CD8-positive, alpha-beta T cell (primary cell): ENCODE measurements at regions of chr4 and their contacts with region 1.

Region 1: DNA sequence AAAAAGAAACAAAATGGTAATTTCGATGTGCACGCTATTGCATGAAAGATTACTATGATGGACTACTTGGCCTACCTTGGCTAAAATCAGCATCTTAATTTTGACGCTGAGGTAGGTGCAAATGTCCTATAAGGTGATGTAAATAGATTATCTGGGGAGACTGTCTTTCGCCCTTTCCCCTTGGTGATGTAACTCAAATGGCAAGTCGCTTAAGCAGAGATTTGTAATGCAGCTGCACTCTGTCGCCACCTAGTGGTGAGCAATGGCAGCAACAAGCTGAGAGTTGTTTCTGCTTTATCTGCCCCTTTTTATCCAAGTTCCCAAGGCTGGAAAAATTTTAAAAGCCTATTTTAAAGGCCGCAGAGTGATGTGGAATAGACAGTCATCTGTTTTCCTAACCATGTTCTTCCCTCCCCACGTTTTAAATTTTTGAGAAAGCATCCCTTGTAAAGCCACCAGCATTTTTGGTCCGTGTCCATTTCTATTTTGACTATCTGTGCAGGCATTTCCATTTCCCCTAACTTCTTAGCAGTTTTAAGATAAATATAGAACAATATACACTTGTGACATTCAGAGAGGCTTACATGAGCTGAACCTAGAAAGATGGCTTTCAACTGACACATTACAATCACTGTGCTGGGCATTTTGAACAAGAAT is 62.4 kb upstream of the PDLIM3 start:
- DNase-seq: peak; percentile 22 to 77 (median 71)
- ATAC-seq: peak; percentile 71
- H3K4me3 ChIP-seq: no peak overlapping the region
- H3K4me3 Mint-ChIP-seq: no peak overlapping the region
- H3K27ac ChIP-seq: no peak overlapping the region
- H3K27ac Mint-ChIP-seq: no peak overlapping the region
- H3K4me1 ChIP-seq: no peaks in the 10 kb centered on the region
- H3K4me1 Mint-ChIP-seq: peaks cover 3% of the 10 kb centered on the region
- H3K27me3 ChIP-seq: no peaks in the 10 kb centered on the region
- H3K27me3 Mint-ChIP-seq: peaks cover 24% of the 10 kb centered on the region
- CTCF ChIP-seq: peak; percentile 99

Region 2: DNA sequence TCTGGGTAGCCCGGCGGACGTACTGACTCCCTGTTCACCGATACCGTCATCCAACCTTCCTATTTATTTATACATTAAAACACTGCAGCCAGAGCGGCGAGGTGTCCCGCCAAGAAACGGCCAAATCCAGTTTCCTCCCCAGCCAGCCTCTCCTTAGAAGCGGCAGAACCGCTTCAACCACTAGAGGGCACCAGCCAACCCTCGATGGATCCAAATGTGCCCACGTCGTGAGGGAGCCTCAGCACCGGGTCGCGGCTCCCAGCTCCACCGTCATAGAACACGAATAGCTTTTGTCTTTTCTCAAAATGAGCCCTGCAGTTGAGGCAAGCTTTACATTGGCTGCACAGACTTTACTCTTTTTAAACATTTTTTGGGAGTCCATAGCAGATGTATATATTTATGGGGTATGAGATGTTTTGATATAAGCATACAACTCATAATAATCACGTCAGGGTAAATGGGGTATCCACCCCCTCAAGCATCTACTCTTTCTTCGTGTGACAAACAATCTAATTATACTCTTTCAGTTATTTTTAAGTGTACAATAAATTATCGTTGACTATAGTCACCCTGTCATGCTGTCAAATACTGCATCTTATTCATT is 592.3 kb before region 1 on chr4:
- CTCF ChIA-PET with region 1: interaction called, 4 read pairs
- POLR2A ChIA-PET with region 1: no interaction called
- intact Hi-C with region 1: loop called in 1 of 2 experiments (anchors 10 kb)
- DNase-seq: peak; percentile 50 to 82 (median 76)
- ATAC-seq: peak; percentile 96
- H3K4me3 ChIP-seq: no peak overlapping the region
- H3K4me3 Mint-ChIP-seq: peak overlapping the region; percentile 50
- H3K27ac ChIP-seq: no peak overlapping the region
- H3K27ac Mint-ChIP-seq: no peak overlapping the region
- H3K4me1 ChIP-seq: no peaks in the 10 kb centered on the region
- H3K4me1 Mint-ChIP-seq: peaks cover 4% of the 10 kb centered on the region
- H3K27me3 ChIP-seq: peaks cover 2 to 6% of the 10 kb centered on the region in 2 experiments
- H3K27me3 Mint-ChIP-seq: peaks cover 51% of the 10 kb centered on the region
- CTCF ChIP-seq: peak; percentile 88

Region 3: GRCh38 chr4:185425647-185426352 is 171.9 kb before region 1 on chr4 and contains the start of gene UFSP2:
- CTCF ChIA-PET with region 1: interaction called, 4 read pairs
- POLR2A ChIA-PET with region 1: interaction called, 4 read pairs
- intact Hi-C with region 1: loop called (anchors 5 to 10 kb)
- DNase-seq: peak; percentile 75 to 97 (median 89)
- ATAC-seq: peak; percentile 86
- H3K4me3 ChIP-seq: peak within 1 kb of the TSS; percentile 87 to 90
- H3K4me3 Mint-ChIP-seq: peak within 1 kb of the TSS; percentile 83
- H3K27ac ChIP-seq: peak within 1 kb of the TSS; percentile 97 to 99
- H3K27ac Mint-ChIP-seq: peak within 1 kb of the TSS; percentile 100
- H3K4me1 ChIP-seq: peaks cover 18% of the 10 kb centered on the region
- H3K4me1 Mint-ChIP-seq: peaks cover 36% of the 10 kb centered on the region
- H3K27me3 ChIP-seq: no peaks in the 10 kb centered on the region
- H3K27me3 Mint-ChIP-seq: peaks cover 5% of the 10 kb centered on the region
- CTCF ChIP-seq: no peak
- total RNA-seq, gene UFSP2: 13.4 to 17.4 TPM

Region 4: DNA sequence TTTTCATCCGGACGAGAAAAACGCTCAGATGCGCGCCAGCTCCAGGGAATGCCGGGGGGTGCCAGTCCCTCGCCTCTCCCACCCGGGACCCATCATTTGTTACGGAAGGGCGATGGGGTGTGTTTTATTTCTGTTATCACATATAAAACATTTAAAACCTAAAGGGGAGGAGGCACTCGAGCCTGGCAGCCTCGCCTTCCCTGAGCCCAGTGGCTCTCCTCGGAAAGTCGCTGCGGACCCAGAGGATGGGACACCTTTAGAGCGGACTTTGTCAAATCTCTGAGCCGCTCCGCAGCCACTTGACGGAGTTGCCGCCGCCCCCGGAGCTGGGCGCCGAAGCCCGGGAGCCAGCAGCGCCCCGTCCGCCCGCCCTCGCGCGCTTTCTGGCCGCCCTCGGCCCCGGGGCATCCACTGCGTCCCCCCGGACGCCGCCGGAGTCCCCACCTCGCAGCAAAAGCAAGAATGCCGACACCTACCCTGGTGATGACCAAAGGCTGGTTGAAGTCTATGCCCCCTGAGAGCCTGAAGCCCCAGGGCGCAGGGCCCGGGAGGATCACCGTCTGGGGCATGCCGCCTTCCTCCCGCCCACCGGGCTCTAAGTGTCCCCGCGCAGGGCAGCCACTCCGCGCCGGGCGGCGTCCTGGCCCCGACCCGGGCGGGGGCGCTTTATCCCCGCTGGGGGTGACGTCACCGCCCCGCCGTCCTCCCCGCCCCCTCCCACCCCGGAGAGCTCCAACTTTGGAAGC is 62.6 kb before region 1 on chr4 and contains the start of gene PDLIM3:
- CTCF ChIA-PET with region 1: no interaction called
- POLR2A ChIA-PET with region 1: no interaction called
- intact Hi-C with region 1: loop called in 1 of 2 experiments (anchors 10 kb)
- DNase-seq: peak in 1 of 9 experiments; percentile 7
- ATAC-seq: no peak
- H3K4me3 ChIP-seq: no peak within 1 kb of the TSS
- H3K4me3 Mint-ChIP-seq: peak within 1 kb of the TSS; percentile 46
- H3K27ac ChIP-seq: no peak within 1 kb of the TSS
- H3K27ac Mint-ChIP-seq: no peak within 1 kb of the TSS
- H3K4me1 ChIP-seq: no peaks in the 10 kb centered on the region
- H3K4me1 Mint-ChIP-seq: peaks cover 5% of the 10 kb centered on the region
- H3K27me3 ChIP-seq: peaks cover 0 to 6% of the 10 kb centered on the region in 2 experiments
- H3K27me3 Mint-ChIP-seq: peaks cover 38% of the 10 kb centered on the region
- CTCF ChIP-seq: no peak
- total RNA-seq, gene PDLIM3: not detected

Region 5: DNA sequence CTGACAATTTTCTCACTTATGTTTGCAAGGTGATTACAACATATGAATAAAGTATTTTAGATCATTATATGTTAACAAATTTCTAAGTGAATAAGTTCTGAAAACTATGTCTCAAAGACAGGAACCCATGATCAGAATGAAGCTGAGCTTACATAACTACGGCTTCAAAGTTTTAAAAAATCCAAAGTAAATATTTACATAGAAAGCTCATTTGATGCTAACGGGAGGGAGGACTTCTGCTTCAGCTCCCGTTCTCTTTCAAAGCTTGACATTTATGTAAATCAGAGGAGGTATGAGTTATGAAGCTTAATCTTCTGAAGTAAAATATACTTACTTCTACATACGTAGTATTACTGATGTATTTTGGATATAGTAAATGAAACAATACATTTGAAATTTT is 10.5 kb after region 1 on chr4:
- CTCF ChIA-PET with region 1: interaction called, 25 read pairs
- POLR2A ChIA-PET with region 1: no interaction called
- intact Hi-C with region 1: no loop called
- DNase-seq: no peak
- ATAC-seq: no peak
- H3K4me3 ChIP-seq: no peak overlapping the region
- H3K4me3 Mint-ChIP-seq: no peak overlapping the region
- H3K27ac ChIP-seq: no peak overlapping the region
- H3K27ac Mint-ChIP-seq: no peak overlapping the region
- H3K4me1 ChIP-seq: no peaks in the 10 kb centered on the region
- H3K4me1 Mint-ChIP-seq: peaks cover 4% of the 10 kb centered on the region
- H3K27me3 ChIP-seq: no peaks in the 10 kb centered on the region
- H3K27me3 Mint-ChIP-seq: peaks cover 5% of the 10 kb centered on the region
- CTCF ChIP-seq: no peak

Region 6: GRCh38 chr4:185656467-185656931 is 58.8 kb after region 1 on chr4:
- CTCF ChIA-PET with region 1: no interaction called
- POLR2A ChIA-PET with region 1: no interaction called
- intact Hi-C with region 1: no loop called
- DNase-seq: no peak
- ATAC-seq: no peak
- H3K4me3 ChIP-seq: no peak overlapping the region
- H3K4me3 Mint-ChIP-seq: no peak overlapping the region
- H3K27ac ChIP-seq: no peak overlapping the region
- H3K27ac Mint-ChIP-seq: no peak overlapping the region
- H3K4me1 ChIP-seq: no peaks in the 10 kb centered on the region
- H3K4me1 Mint-ChIP-seq: no peaks in the 10 kb centered on the region
- H3K27me3 ChIP-seq: no peaks in the 10 kb centered on the region
- H3K27me3 Mint-ChIP-seq: peaks cover 4% of the 10 kb centered on the region
- CTCF ChIP-seq: no peak

Region 7: GRCh38 chr4:186067757-186068385 is 470.2 kb after region 1 on chr4:
- CTCF ChIA-PET with region 1: no interaction called
- POLR2A ChIA-PET with region 1: no interaction called
- intact Hi-C with region 1: no loop called
- DNase-seq: peak in 7 of 9 experiments; percentile 9 to 64 (median 27)
- ATAC-seq: peak; percentile 64
- H3K4me3 ChIP-seq: peak overlapping the region; percentile 46 to 69
- H3K4me3 Mint-ChIP-seq: peak overlapping the region; percentile 83
- H3K27ac ChIP-seq: no peak overlapping the region
- H3K27ac Mint-ChIP-seq: no peak overlapping the region
- H3K4me1 ChIP-seq: peaks cover 11% of the 10 kb centered on the region
- H3K4me1 Mint-ChIP-seq: peaks cover 25% of the 10 kb centered on the region
- H3K27me3 ChIP-seq: no peaks in the 10 kb centered on the region
- H3K27me3 Mint-ChIP-seq: peaks cover 11% of the 10 kb centered on the region
- CTCF ChIP-seq: no peak